Activated CD4-positive, alpha-beta memory T cell treated with anti-CD3 and anti-CD28 coated beads for 36 hours (primary cell): ENCODE measurements at regions of chr1 and their contacts with region 1.

Region 1: GRCh38 chr1:172398970-172399755 is 21.3 kb upstream of the C1orf105 start:
- DNase-seq: peak; percentile 41
- H3K4me3 Mint-ChIP-seq: peak overlapping the region; percentile 15
- H3K27ac Mint-ChIP-seq: peak overlapping the region; percentile 72
- H3K4me1 Mint-ChIP-seq: peaks cover 67% of the 10 kb centered on the region
- H3K27me3 Mint-ChIP-seq: no peaks in the 10 kb centered on the region

Region 2: DNA sequence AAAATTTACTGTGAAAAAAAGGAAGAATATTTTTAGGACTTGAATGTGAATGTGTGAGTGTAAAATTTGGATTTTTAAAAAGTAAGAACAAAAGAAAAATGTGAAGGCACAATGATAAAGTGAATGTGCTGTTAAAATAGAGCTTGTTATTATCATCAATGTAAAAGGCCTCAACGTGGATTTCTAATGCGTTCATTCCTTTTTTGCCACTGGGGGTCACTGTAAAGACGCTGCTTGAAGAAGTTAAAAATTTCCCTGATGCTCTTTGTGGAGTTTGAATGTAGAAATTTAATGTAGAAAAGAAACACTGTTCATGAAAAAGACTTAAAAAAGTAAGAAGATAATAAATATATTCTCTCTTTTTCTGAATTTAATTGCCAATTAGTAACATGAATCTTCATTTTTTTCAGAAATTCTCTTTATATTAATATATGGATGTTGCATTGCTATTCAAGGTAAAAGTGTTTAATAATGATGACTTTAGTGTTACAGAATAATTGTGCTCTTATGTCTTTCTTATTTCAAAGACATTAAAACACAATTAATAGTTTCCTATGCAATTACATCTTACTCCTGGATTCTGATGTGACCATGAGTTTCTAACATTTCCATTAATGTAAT is 396.3 kb before region 1 on chr1:
- CTCF ChIA-PET with region 1: interaction called, 33 read pairs
- POLR2A ChIA-PET with region 1: no interaction called
- intact Hi-C with region 1: loop called (anchors 1 kb)
- DNase-seq: peak; percentile 25
- H3K4me3 Mint-ChIP-seq: no peak overlapping the region
- H3K27ac Mint-ChIP-seq: no peak overlapping the region
- H3K4me1 Mint-ChIP-seq: no peaks in the 10 kb centered on the region
- H3K27me3 Mint-ChIP-seq: no peaks in the 10 kb centered on the region

Region 3: DNA sequence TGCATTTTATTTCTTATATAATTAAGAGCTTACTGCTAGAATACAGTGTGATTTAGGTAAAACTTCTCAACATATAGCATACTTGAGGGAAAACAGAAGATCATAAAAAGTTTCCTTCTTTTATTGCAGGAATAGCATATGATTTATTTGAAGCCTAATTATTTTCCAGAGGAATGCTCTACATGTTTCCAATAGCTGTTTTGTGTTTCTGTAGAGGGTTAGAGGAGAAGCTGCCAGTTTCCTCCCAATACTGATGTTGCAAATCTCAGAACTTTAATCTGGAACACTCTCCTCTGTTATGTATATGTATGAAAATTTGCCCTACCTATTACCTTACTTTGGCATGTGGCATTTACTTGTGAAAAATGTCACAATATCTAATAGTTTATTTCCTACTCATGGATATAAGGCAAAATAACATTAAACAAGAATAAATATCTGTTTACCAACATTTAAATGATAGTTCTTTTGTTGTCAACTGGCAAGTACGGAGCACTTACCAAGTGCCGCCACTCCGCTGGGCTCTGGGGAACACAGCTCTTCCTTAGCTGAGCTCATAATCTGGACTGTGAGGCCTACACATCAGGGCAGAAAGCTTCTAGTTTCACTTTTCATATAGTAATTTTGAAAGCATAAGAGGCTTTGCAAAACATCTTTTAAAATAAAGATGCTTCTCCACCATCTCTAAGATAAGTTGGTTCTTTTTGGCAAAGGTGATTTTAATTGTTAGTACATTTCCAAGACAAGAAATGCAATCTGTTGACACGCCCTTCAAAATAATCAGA is 218.5 kb before region 1 on chr1:
- CTCF ChIA-PET with region 1: interaction called, 4 read pairs
- POLR2A ChIA-PET with region 1: interaction called, 3 read pairs
- intact Hi-C with region 1: loop called (anchors 1 kb)
- DNase-seq: peak; percentile 66
- H3K4me3 Mint-ChIP-seq: peak overlapping the region; percentile 74
- H3K27ac Mint-ChIP-seq: peak overlapping the region; percentile 95
- H3K4me1 Mint-ChIP-seq: peaks cover 45% of the 10 kb centered on the region
- H3K27me3 Mint-ChIP-seq: no peaks in the 10 kb centered on the region

Region 4: GRCh38 chr1:172357753-172358385 is 41.3 kb before region 1 on chr1:
- CTCF ChIA-PET with region 1: interaction called, 25 read pairs
- POLR2A ChIA-PET with region 1: interaction called, 21 read pairs
- intact Hi-C with region 1: loop called (anchors 1 kb)
- DNase-seq: no peak
- H3K4me3 Mint-ChIP-seq: peak overlapping the region; percentile 11
- H3K27ac Mint-ChIP-seq: peak overlapping the region; percentile 85
- H3K4me1 Mint-ChIP-seq: peaks cover 66% of the 10 kb centered on the region
- H3K27me3 Mint-ChIP-seq: no peaks in the 10 kb centered on the region

Region 5: GRCh38 chr1:172429331-172430127 is 30.4 kb after region 1 on chr1:
- CTCF ChIA-PET with region 1: interaction called, 4 read pairs
- POLR2A ChIA-PET with region 1: no interaction called
- intact Hi-C with region 1: loop called (anchors 1 kb)
- DNase-seq: peak; percentile 50
- H3K4me3 Mint-ChIP-seq: no peak overlapping the region
- H3K27ac Mint-ChIP-seq: no peak overlapping the region
- H3K4me1 Mint-ChIP-seq: peaks cover 33% of the 10 kb centered on the region
- H3K27me3 Mint-ChIP-seq: no peaks in the 10 kb centered on the region

Region 6: DNA sequence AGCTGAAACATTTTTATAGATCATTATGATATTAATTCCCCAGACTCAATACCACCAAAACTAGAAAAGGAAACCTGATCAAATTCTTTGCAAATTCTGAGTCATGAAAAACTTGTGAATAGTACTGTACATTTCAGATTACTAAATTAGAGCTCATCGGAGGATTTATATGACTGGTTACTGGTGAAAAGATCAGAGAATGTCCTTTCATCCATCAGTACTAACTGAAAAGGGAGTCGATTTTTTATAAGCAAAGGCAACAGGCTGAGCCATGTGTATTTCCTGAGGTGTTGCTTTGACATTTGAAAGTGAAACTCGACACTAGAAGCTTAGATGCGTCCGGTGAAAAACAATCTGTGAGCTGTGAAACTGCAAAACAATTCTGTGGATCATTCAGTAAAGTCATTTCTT is 495.9 kb after region 1 on chr1:
- CTCF ChIA-PET with region 1: no interaction called
- POLR2A ChIA-PET with region 1: no interaction called
- intact Hi-C with region 1: no loop called
- DNase-seq: peak; percentile 29
- H3K4me3 Mint-ChIP-seq: peak overlapping the region; percentile 54
- H3K27ac Mint-ChIP-seq: peak overlapping the region; percentile 14
- H3K4me1 Mint-ChIP-seq: peaks cover 38% of the 10 kb centered on the region
- H3K27me3 Mint-ChIP-seq: peaks cover 18% of the 10 kb centered on the region